GM12878 (cell line): ENCODE measurements at regions of chr19 and their contacts with region 1.

Region 1: GRCh38 chr19:39341719-39342604 is at the start of gene SAMD4B:
- DNase-seq: peak; percentile 87
- ATAC-seq: peak; percentile 96
- H3K4me3 ChIP-seq: peak within 1 kb of the TSS; percentile 95
- H3K27ac ChIP-seq: peak within 1 kb of the TSS; percentile 82
- H3K4me1 ChIP-seq: peaks cover 14% of the 10 kb centered on the region
- H3K27me3 ChIP-seq: no peaks in the 10 kb centered on the region
- CTCF ChIP-seq: peak; percentile 57 to 91 (median 65); a peak in 5 of 6 replicates
- EP300 ChIP-seq: no peak
- POLR2A ChIP-seq: peak; percentile 99
- RAD21 ChIP-seq: peak; percentile 2; the same call in 1 of the 2 replicates
- polyA plus RNA-seq, gene SAMD4B: 2.4 to 3.8 TPM

Region 2: GRCh38 chr19:39390755-39391592 is 49.0 kb after region 1 on chr19 and contains the starts of genes MED29 and PAF1:
- CTCF ChIA-PET with region 1: interaction called, 4 read pairs
- POLR2A ChIA-PET with region 1: interaction called, 9 read pairs
- RAD21 ChIA-PET with region 1: interaction called, 4 read pairs
- SMC1A ChIA-PET with region 1: interaction called, 4 read pairs
- in situ Hi-C with region 1: no loop called
- intact Hi-C with region 1: loop called (anchors 2 kb)
- DNase-seq: peak; percentile 100
- ATAC-seq: peak; percentile 99
- H3K4me3 ChIP-seq: peak within 1 kb of the TSS; percentile 99
- H3K27ac ChIP-seq: peak within 1 kb of the TSS; percentile 96
- H3K4me1 ChIP-seq: peaks cover 10% of the 10 kb centered on the region
- H3K27me3 ChIP-seq: no peaks in the 10 kb centered on the region
- CTCF ChIP-seq: 0 out of 6 replicates have a peak, but pooled peaks of 1 of the 3 experiments have one; percentile 10
- EP300 ChIP-seq: no peak
- POLR2A ChIP-seq: peak; percentile 94
- RAD21 ChIP-seq: no peak
- polyA plus RNA-seq, gene MED29: 3.2 to 5.1 TPM
- polyA plus RNA-seq, gene PAF1: 1.7 to 3.7 TPM

Region 3: GRCh38 chr19:39397360-39398296 is 55.7 kb after region 1 on chr19:
- CTCF ChIA-PET with region 1: interaction called, 7 read pairs
- POLR2A ChIA-PET with region 1: interaction called, 12 read pairs
- RAD21 ChIA-PET with region 1: interaction called, 5 read pairs
- SMC1A ChIA-PET with region 1: interaction called, 4 read pairs
- in situ Hi-C with region 1: no loop called
- intact Hi-C with region 1: no loop called
- DNase-seq: no peak
- ATAC-seq: peak; percentile 78
- H3K4me3 ChIP-seq: peak overlapping the region; percentile 26
- H3K27ac ChIP-seq: peak overlapping the region; percentile 99
- H3K4me1 ChIP-seq: peaks cover 54% of the 10 kb centered on the region
- H3K27me3 ChIP-seq: no peaks in the 10 kb centered on the region
- CTCF ChIP-seq: peak; percentile 97 to 98 (median 98); a peak in 5 of 6 replicates
- EP300 ChIP-seq: peak in 1 of 2 experiments; percentile 4; a peak in 1 of 4 replicates
- POLR2A ChIP-seq: no peak; the same call in 1 of the 2 replicates
- RAD21 ChIP-seq: peak; percentile 94